K562 (cell line): ENCODE measurements at regions of chr10 and their contacts with region 1.

Region 1: GRCh38 chr10:23158370-23158769 is 33.7 kb upstream of the PTF1A start:
- DNase-seq: peak; percentile 70 to 86 (median 82)
- ATAC-seq: peak; percentile 94
- H3K4me3 ChIP-seq: no peak overlapping the region
- H3K27ac ChIP-seq: no peak overlapping the region
- H3K4me1 ChIP-seq: peaks cover 0 to 2% of the 10 kb centered on the region in 2 experiments; a peak in 2 of 5 replicates
- H3K27me3 ChIP-seq: peaks cover 3 to 28% of the 10 kb centered on the region in 2 experiments; a peak in 4 of 5 replicates
- CTCF ChIP-seq: peak; percentile 83 to 89 (median 83)
- EP300 ChIP-seq: no peak
- POLR2A ChIP-seq: no peak
- RAD21 ChIP-seq: peak; percentile 72 to 82

Region 2: DNA sequence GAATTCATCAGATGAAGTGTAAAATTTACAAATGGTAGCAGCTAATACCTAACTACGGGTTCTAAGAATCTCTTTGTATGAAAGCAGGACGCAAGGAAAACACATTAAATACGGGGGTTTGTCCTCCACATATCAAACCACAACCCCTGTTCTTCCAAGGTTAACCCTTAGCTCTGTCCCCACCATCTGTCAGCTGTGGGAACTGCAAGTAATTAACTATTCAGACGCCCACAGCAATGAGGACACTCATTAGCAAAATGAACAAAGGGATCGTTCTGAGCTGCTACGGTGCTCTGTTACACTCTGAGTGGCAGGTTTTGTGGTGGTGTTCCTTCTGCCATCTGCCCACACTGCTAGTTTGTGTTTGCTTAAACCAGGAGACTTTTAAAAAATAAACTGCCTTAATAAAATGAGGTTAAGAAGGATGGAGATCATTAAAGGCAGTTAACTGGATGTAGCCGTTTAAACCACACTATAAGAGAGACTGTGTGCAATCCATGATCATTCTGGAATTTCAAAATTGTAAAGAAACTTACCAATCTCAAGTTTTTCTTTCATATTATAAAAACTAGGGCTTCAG is 134.9 kb after region 1 on chr10:
- CTCF ChIA-PET with region 1: interaction called, 27 read pairs
- POLR2A ChIA-PET with region 1: no interaction called
- in situ Hi-C with region 1: loop called (anchors 5 kb)
- intact Hi-C with region 1: no loop called
- DNase-seq: peak; percentile 23 to 60 (median 39)
- ATAC-seq: peak; percentile 96
- H3K4me3 ChIP-seq: no peak overlapping the region
- H3K27ac ChIP-seq: no peak overlapping the region
- H3K4me1 ChIP-seq: no peaks in the 10 kb centered on the region
- H3K27me3 ChIP-seq: no peaks in the 10 kb centered on the region
- CTCF ChIP-seq: peak; percentile 72 to 80 (median 74)
- EP300 ChIP-seq: no peak
- POLR2A ChIP-seq: no peak
- RAD21 ChIP-seq: peak; percentile 53 to 70

Region 3: DNA sequence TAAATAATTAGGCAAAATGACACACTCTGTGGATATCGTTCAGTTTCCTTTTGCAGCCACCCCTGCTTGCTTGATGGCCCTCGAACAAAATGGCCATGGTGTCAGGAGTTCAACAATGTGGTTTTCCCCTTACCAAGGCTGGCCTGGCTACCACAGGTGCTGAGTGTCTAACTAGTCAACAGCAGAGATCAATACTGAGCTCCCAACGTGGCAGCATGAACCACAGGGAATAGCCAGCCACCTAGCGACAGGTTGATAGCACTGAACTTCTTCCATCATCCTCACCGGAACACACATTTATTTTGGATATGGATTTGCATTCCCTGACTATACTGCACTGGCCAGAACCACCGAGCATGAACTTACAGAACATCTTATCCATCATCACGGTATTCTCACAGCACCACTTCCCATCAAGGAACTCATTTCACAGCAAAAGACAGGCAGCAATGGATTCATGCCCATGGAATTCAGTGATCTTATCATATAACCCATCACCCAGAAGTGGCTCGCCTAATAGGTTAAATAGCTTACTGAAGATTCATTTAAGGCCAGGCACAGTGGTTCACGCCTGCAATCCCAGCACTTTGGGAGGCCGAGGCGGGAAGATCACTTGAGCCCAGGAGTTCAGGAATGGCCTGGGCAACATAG is 179.9 kb after region 1 on chr10:
- CTCF ChIA-PET with region 1: no interaction called
- POLR2A ChIA-PET with region 1: no interaction called
- in situ Hi-C with region 1: no loop called
- intact Hi-C with region 1: no loop called
- DNase-seq: peak in 2 of 4 experiments; percentile 10
- ATAC-seq: peak; percentile 47; the same call in 1 of the 3 replicates
- H3K4me3 ChIP-seq: no peak overlapping the region
- H3K27ac ChIP-seq: no peak overlapping the region
- H3K4me1 ChIP-seq: no peaks in the 10 kb centered on the region
- H3K27me3 ChIP-seq: peaks cover 2 to 11% of the 10 kb centered on the region in 2 experiments; a peak in 4 of 5 replicates
- CTCF ChIP-seq: peak in 2 of 3 experiments; percentile 22 to 28; a peak in 1 of 6 replicates
- EP300 ChIP-seq: no peak
- POLR2A ChIP-seq: no peak
- RAD21 ChIP-seq: no peak; a peak in 1 of 4 replicates

Region 4: DNA sequence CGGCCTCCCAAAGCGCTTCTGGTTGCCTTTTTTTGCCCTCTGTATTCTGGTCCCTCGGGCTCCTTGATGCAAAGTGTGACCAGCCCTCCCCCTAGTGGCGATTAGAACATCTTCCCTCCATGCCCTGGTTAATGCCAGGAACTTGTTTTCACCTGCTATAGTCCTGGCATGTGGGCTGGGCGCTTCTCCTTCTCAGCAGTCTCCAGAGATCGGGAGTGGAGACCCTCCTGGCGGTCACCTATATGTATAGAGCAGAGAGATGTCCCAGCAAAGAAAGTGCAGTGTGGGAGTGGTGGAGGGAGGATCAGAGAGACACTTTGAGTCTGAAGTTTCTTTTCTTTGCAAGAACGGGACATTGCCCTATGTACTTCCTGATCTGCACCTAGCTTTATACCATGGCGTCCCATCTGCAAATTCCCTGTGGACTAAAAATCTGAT is 544.6 kb after region 1 on chr10:
- CTCF ChIA-PET with region 1: interaction called, 6 read pairs
- POLR2A ChIA-PET with region 1: no interaction called
- in situ Hi-C with region 1: no loop called
- intact Hi-C with region 1: loop called (anchors 2 kb)
- DNase-seq: peak; percentile 14 to 53 (median 20)
- ATAC-seq: peak; percentile 81
- H3K4me3 ChIP-seq: no peak overlapping the region
- H3K27ac ChIP-seq: no peak overlapping the region
- H3K4me1 ChIP-seq: no peaks in the 10 kb centered on the region
- H3K27me3 ChIP-seq: no peaks in the 10 kb centered on the region
- CTCF ChIP-seq: peak; percentile 52 to 57 (median 55)
- EP300 ChIP-seq: no peak
- POLR2A ChIP-seq: no peak
- RAD21 ChIP-seq: peak; percentile 40 to 51

Region 5: DNA sequence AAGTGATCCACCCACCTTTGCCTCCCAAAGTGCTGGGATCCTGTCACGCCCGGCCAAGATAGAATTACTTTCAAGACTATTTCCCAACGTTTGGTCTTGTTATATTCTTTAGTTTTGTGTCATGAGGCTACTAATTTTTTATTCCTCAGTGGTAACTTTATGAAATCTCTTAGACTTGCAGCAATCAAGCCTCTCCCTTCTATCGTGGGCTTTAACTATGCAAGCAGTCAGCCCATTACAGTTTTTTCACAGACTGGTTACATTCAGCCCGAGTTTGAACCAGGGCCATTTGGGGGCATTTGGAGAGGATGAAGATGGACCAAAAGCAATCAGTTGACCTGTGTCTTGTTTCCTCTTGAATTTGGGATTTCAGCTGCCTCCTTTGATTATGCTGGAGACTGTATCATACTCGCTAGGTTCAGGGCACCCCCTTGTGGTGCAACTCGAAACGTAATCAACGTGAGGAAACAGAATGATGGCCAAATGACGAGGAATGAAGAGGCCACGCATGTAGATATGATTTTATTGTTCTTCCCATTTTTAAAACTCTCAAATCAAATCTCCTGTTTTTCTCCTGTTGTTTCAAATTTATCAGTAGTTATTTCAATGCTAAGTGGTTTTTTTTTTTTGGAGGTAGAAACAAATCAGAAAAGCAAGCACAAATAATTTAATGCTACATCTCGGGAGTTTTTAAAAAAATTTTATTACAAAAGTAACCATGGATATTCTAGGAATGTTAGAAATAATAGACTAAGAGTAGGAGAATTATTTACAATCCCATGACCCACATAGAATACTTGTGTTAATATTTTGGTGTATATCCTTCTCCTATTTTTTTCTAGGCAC is 1202.1 kb after region 1 on chr10:
- CTCF ChIA-PET with region 1: no interaction called
- POLR2A ChIA-PET with region 1: no interaction called
- in situ Hi-C with region 1: no loop called
- intact Hi-C with region 1: loop called (anchors 10 kb)
- DNase-seq: peak; percentile 39 to 57 (median 44)
- ATAC-seq: peak; percentile 88
- H3K4me3 ChIP-seq: no peak overlapping the region
- H3K27ac ChIP-seq: no peak overlapping the region
- H3K4me1 ChIP-seq: no peaks in the 10 kb centered on the region
- H3K27me3 ChIP-seq: 0 out of 5 replicates have a peak, but pooled peaks cover 0 to 8% of the 10 kb centered on the region in 2 experiments
- CTCF ChIP-seq: peak; percentile 46 to 67 (median 65)
- EP300 ChIP-seq: no peak
- POLR2A ChIP-seq: no peak
- RAD21 ChIP-seq: peak; percentile 37 to 59; a peak in 3 of 4 replicates